GM10248 (cell line): ENCODE measurements at regions of chr3 and their contacts with region 1.

Region 1: DNA sequence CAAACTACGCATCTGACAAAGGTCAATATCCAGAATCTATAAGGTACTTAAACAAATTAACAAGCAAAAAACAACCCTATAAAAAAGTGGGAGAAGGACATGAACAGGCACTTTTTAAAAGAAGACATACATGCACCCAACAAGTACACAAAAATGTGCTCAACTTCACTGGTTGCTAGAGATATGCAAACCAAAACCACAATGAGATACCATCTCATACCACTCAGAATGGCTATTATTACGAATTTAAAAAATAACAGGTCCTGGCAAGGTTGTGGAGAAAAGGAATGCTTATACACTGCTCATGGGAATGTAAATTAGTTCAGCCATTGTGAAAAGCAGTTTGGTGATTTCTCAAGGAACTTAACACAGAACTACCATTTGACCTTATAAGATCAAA is 175.6 kb upstream of the MLF1 start:
- DNase-seq: no peak
- CTCF ChIP-seq: no peak

Region 2: GRCh38 chr3:158407844-158408517 is 12.6 kb after region 1 on chr3:
- CTCF ChIA-PET with region 1: interaction called, 15 read pairs
- POLR2A ChIA-PET with region 1: no interaction called
- DNase-seq: no peak
- CTCF ChIP-seq: no peak